Psoas muscle (tissue), 8 donors: ENCODE measurements at regions of chr11 and their contacts with region 1.

Region 1: GRCh38 chr11:112795142-112795815 is 165.9 kb upstream of the NCAM1 start:
- DNase-seq: peak; percentile 55 to 67
- ATAC-seq: peak; percentile 72 to 86 (median 74)
- H3K4me3 ChIP-seq: no peak overlapping the region
- H3K27ac ChIP-seq: peak overlapping the region; percentile 47
- H3K4me1 ChIP-seq: no peaks in the 10 kb centered on the region
- H3K27me3 ChIP-seq: no peaks in the 10 kb centered on the region
- CTCF ChIP-seq: peak; percentile 65

Region 2: DNA sequence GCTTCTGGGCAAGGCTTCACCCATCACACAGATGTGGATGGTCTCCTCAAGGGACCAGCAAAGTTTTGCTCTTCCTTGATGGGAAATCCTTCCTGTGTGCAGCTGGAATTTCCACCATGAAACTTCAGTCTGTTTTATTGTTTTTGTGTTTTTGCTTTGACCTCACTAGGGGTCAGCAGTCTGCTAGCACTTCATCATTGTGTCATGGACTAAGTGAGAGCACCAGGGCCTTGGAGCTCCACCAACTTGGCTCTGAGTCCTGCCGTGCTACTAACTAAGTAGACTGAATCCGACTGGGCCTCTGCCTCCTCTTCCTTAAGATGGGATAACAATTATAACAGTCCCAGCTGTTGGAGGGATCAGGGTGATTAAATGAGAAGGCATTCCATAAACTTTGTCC is 139.9 kb before region 1 on chr11:
- intact Hi-C with region 1: loop called in 1 of 2 experiments (anchors 5 kb)
- DNase-seq: peak; percentile 77 to 91
- ATAC-seq: peak; percentile 21 to 52 (median 31)
- H3K4me3 ChIP-seq: no peak overlapping the region
- H3K27ac ChIP-seq: peak overlapping the region; percentile 14
- H3K4me1 ChIP-seq: peaks cover 66% of the 10 kb centered on the region
- H3K27me3 ChIP-seq: no peaks in the 10 kb centered on the region
- CTCF ChIP-seq: no peak

Region 3: DNA sequence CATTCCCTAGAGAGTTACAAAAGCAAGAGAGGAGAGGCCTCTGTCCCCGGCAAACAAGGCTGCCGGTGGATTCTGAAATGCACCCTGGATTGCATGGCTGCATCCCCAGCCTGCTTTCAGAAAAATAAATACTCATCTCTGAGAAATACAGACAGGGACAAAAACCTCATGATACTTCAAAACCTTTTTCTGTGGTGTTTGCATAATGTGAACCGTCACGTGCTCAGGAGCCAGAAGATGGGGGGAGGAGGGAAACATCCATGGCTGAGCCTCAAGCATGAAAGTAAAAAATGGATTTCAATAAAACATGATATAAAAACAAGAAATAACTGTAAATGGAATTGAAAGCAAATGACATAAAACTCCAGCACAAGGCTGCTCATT is 32.6 kb before region 1 on chr11:
- intact Hi-C with region 1: no loop called
- DNase-seq: no peak
- ATAC-seq: no peak
- H3K4me3 ChIP-seq: no peak overlapping the region
- H3K27ac ChIP-seq: no peak overlapping the region
- H3K4me1 ChIP-seq: no peaks in the 10 kb centered on the region
- H3K27me3 ChIP-seq: no peaks in the 10 kb centered on the region
- CTCF ChIP-seq: no peak

Region 4: GRCh38 chr11:113113801-113114706 is 318.8 kb after region 1 on chr11:
- intact Hi-C with region 1: loop called in 1 of 2 experiments (anchors 5 kb)
- DNase-seq: peak; percentile 59 to 77
- ATAC-seq: peak; percentile 90 to 96 (median 96)
- H3K4me3 ChIP-seq: no peak overlapping the region
- H3K27ac ChIP-seq: no peak overlapping the region
- H3K4me1 ChIP-seq: peaks cover 13% of the 10 kb centered on the region
- H3K27me3 ChIP-seq: no peaks in the 10 kb centered on the region
- CTCF ChIP-seq: peak; percentile 77